ENCODE measurements at regions of chr11 and their contacts with region 1.

Region 1: DNA sequence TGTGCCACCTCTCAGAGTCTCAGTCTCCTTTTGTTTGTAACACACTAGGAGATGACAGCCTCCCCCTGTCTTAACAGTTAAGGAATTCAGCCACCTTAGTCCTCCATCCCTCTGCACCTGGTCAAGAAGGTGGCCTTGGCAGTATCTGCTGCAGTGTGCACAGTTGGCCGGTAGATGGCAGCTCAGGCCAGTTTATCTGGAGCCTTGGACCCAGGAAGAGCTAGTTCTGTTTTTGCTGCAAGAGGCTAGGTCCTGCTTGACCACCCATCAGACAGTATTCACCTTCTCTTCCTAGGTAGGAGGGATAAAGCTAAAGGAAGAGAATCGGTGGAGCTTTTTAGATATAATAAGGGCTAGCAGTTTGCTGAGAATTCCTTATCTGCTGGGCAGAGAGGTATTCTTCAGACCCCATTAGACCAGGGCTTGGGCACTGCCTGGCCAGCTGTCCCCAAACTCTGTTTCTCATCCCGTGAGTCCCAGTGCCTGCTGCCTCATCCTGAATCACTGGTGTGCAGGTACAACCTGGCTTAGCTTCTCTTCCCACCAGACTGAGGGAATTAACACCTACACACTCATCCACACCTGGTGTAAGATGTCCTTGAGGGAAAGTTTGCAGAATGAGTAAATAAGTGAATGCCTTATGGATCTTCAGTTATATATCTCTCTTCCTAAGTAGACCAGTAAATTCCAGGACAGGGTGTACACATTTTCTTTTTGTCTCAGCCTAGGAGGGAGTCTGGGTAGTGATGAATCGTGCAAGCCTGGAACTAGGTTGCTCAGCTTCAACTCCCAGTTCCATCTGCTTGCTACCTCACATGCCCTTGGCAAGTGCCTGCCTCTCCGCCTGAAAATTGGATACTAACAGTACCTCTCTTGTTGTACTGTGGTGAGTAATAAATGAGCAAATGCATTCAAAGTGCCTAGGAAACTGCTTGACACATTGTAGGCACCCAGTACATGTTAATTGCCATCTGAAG is 70.8 kb upstream of the NARS2 start:
- DNase-seq: peak; percentile 71
- CTCF ChIP-seq: peak; percentile 95

Region 2: DNA sequence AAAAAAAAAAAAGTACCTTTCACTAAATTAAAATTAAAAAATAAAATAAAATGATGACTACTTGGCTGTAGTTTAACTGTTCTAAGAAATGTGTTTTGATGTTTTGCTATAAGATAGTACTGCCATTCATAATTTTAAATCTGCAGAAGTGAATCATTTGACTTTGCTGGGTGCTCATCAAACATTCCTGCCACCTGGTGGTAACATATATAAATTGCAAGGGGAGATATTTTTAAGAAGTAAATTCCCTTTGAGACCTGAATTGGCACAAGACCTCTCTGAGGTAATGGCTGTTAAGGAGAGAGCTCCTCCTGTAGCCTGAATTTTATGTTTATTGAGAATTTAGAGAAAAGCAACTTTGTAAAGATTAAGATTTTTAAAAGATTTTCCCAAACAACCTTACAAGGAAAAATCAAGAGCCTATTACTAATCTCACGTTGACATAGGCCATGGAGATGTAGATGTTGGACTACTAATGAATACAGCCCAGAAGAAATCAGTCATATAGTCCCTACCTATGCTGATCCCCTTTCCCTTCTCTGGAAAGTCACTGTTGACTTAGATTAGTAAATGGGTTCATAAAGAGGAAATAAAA is 59.0 kb before region 1 on chr11:
- CTCF ChIA-PET with region 1: no interaction called
- POLR2A ChIA-PET with region 1: no interaction called
- DNase-seq: peak; percentile 44
- CTCF ChIP-seq: peak; percentile 45

Region 3: DNA sequence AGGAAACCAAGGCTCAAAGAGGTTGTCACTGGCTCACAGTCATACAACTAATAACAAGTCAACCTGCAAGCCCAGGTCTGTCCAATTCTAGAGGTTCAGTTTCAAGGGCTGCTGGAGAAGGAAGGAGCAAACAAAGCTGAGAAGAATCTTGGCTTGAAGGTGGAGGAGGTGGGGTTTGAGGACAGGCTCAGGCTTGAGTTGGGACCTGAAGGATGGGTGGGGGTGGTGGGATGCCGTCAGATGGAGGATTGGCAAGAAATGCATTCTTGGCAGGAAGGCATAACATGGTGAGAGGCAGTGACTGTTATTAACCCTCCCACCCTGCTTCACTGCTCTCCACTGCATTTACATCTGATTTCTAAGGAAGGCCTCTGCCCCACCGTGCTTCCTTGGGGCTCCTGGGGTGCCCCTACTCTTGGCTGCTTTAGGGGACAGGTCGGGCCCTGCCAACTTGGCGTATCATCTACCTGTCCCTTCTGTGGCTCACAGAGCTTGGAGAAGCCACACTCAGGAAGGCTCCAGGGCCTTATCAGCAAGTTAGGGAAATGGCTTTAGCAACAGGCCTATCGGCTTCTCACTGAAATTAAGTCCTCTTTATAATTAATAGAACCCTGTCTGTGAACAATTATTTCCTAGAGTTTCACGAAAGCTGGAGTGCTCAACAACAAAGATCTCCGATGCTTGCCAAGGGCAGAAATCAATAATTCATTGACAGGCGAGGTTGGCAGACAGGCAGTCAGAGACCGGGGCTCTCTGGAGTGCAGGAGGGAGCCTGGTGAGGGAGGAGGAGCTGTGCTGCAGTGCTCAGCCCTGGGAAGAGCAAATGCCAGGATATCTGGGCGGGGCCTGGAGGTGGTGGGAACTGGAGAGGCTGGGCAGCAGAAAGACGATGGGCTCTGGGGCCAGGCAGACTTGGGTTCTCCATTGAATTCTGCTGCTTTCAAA is 14.1 kb after region 1 on chr11:
- CTCF ChIA-PET with region 1: interaction called, 67 read pairs
- POLR2A ChIA-PET with region 1: no interaction called
- DNase-seq: no peak
- CTCF ChIP-seq: no peak

Region 4: DNA sequence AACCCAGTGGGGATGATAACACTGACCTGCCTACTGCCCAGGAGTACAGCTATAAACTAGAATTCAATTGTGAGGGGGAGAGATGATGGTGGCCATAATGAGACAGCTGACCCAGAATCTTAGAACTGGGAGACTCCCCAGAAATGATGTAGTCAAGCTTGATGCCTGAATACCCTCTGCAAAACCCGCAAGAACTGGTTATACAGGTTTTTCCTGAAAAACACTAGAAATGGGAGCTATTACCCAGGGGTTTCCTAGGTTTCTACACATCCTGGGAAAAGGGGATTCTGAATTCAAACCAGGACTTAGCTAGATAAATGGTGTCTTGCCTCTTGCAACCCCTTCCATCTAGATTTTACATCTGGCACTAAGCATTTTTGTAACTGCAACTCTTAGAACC is 43.0 kb after region 1 on chr11:
- CTCF ChIA-PET with region 1: interaction called, 11 read pairs
- POLR2A ChIA-PET with region 1: no interaction called
- DNase-seq: no peak
- CTCF ChIP-seq: no peak

Region 5: DNA sequence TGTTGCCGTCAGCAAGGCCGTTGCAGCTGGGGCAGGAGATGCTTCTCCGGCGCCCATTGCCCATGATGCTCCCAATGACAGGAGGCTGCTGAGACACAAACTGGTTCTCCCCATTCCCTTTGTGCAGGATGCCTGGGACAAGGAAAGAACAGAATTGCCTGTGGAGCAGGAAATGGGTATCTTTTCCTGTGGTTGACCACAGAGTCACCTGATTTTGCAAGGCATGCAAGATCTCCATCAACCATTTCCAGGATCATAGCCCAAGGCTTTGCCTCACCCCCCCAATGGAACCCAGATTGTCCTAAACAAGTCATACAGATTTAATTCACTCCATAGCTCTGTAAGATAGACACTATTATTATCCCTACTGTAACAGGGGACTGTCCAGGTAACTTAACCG is 77.3 kb after region 1 on chr11:
- CTCF ChIA-PET with region 1: interaction called, 149 read pairs
- POLR2A ChIA-PET with region 1: no interaction called
- DNase-seq: no peak
- CTCF ChIP-seq: no peak

Region 6: DNA sequence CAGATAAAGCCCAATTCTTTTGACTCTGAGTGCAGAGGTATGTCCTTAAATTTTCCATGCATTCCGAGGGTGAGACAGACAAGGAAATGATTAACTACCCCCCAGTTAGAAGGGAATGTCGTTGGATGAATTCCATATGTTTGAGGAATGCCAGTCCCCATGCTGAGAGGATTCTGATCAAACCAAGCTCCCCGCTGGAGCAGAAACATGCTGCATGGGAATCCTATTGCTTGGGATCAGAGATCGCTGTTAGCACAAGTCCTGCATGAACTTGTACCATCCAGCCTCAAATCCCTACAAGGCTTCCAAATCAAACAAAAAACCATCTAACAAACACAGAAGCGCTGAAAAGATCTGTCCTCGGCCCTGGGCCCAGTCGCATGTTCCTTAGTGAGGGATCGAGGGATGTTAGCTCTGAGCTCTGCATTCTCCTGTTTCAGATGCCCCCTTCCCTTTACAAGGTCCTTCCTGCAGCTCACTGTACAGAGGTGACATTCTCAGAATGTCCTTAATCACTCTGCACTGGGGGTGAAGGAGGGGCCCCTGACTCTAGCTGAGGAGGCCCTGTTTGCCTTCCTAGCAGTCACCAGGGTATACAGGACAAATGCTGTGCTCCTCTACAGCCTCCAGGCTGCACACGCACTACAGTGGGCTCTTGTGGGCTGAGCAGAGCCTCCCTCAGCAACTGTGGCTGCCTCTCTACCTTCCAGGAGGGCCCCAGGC is 441.9 kb after region 1 on chr11:
- CTCF ChIA-PET with region 1: interaction called, 13 read pairs
- POLR2A ChIA-PET with region 1: no interaction called
- DNase-seq: no peak
- CTCF ChIP-seq: no peak

Region 7: GRCh38 chr11:79493555-79494171 is 848.1 kb after region 1 on chr11:
- CTCF ChIA-PET with region 1: interaction called, 11 read pairs
- POLR2A ChIA-PET with region 1: no interaction called
- DNase-seq: peak; percentile 80
- CTCF ChIP-seq: peak; percentile 92

Measured in GM10248 (cell line).